MCF 10A (cell line): ENCODE measurements at regions of chr5 and their contacts with region 1.

Region 1: GRCh38 chr5:14685757-14686156 is 21.2 kb downstream of the OTULIN start:
- DNase-seq: peak; percentile 51
- H3K4me3 Mint-ChIP-seq: no peak overlapping the region
- H3K27ac Mint-ChIP-seq: peak overlapping the region; percentile 14
- H3K4me1 Mint-ChIP-seq: peaks cover 19% of the 10 kb centered on the region
- H3K27me3 Mint-ChIP-seq: no peaks in the 10 kb centered on the region
- CTCF ChIP-seq: peak; percentile 60

Region 2: DNA sequence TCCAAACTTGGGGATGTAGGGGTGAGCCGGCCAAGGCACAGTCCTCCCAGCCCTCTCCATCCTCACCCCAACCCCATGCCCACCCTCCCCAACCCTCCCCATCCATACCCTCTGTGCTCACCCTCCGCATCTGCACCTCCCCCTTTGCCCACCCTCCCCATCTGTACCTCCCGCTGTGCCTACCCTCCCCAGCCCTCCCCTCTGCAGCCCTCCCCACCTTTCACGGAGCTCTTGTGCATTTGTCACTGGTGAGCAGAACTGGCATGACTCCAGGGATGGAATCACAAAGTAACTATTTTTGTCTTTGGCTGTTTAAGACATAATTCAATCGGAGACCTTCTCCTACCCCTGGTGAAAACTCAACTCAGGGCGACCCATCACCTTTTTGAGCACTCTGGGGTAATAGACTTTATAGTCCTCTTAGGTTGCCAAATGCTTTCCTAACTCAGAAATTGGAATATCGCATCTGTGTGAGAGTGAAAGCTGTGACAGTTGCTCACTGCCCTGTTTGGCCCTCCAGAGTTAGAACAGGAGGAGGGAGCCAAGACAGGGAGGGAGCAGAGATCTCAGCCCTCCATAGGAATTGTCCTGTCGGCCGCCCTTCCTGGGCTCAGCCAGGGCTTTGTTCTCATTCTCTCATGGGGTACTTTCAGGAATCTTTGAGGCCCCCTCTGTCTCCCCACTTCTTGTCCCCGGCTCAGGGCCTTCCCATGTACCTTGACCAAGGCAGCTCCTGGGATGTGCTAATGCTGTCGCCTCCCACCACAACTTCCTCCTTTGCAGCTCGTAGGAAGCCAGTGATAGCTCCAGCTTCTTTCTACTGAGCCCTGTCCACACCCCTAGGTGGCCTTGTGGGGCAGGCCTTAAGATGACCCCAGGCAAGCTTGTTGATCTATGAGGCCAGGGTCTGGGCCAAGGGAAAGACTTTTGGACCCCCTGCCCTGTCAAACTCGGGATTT is 15.0 kb after region 1 on chr5:
- CTCF ChIA-PET with region 1: interaction called, 47 read pairs
- POLR2A ChIA-PET with region 1: interaction called, 10 read pairs
- intact Hi-C with region 1: no loop called
- DNase-seq: no peak
- H3K4me3 Mint-ChIP-seq: no peak overlapping the region
- H3K27ac Mint-ChIP-seq: no peak overlapping the region
- H3K4me1 Mint-ChIP-seq: peaks cover 16% of the 10 kb centered on the region
- H3K27me3 Mint-ChIP-seq: no peaks in the 10 kb centered on the region
- CTCF ChIP-seq: no peak

Region 3: GRCh38 chr5:14706615-14707021 is 20.9 kb after region 1 on chr5:
- CTCF ChIA-PET with region 1: interaction called, 47 read pairs
- POLR2A ChIA-PET with region 1: interaction called, 10 read pairs
- intact Hi-C with region 1: no loop called
- DNase-seq: no peak
- H3K4me3 Mint-ChIP-seq: no peak overlapping the region
- H3K27ac Mint-ChIP-seq: peak overlapping the region; percentile 52
- H3K4me1 Mint-ChIP-seq: peaks cover 20% of the 10 kb centered on the region
- H3K27me3 Mint-ChIP-seq: no peaks in the 10 kb centered on the region
- CTCF ChIP-seq: no peak

Region 4: DNA sequence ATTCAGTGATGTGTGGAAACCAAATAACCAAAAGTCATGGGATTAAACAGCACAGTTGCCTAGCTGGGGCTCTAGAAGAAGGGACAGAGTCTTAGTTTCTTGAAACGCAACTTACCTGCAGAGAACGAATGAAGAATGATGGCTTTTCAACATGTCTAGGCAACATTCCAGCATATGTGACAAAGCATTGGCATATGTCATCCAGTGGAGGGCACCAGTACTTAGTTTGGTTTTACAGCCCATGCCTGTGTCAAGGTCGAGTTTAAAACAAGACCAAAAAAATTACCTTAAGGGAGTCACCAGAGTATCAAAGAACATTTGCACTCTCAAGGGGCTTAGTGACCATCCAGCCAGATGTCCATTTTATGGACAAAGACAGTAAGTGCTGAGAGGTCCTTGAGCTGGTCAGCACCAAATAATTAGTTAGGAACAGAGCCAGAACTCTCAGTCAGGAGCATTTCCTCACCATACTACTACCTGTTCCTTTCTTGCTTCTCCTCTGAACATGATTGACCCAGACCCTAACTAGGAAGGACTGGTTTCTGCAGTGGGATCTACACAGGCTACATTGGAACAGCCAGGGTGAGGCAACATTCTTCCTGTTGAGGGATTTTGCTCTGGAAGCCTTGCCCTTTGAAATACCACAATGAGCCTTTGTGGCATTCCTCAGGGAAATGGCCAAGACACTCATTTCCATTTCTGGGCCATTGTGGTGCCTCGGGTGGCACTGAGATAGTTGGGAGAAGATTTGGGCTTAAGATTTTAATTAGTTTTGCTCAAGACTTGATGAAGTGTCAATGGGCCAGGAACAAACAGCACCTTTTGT is 261.3 kb after region 1 on chr5:
- CTCF ChIA-PET with region 1: interaction called, 3 read pairs
- POLR2A ChIA-PET with region 1: no interaction called
- intact Hi-C with region 1: loop called (anchors 5 kb)
- DNase-seq: peak; percentile 66
- H3K4me3 Mint-ChIP-seq: no peak overlapping the region
- H3K27ac Mint-ChIP-seq: no peak overlapping the region
- H3K4me1 Mint-ChIP-seq: peaks cover 6% of the 10 kb centered on the region
- H3K27me3 Mint-ChIP-seq: no peaks in the 10 kb centered on the region
- CTCF ChIP-seq: peak; percentile 27

Region 5: DNA sequence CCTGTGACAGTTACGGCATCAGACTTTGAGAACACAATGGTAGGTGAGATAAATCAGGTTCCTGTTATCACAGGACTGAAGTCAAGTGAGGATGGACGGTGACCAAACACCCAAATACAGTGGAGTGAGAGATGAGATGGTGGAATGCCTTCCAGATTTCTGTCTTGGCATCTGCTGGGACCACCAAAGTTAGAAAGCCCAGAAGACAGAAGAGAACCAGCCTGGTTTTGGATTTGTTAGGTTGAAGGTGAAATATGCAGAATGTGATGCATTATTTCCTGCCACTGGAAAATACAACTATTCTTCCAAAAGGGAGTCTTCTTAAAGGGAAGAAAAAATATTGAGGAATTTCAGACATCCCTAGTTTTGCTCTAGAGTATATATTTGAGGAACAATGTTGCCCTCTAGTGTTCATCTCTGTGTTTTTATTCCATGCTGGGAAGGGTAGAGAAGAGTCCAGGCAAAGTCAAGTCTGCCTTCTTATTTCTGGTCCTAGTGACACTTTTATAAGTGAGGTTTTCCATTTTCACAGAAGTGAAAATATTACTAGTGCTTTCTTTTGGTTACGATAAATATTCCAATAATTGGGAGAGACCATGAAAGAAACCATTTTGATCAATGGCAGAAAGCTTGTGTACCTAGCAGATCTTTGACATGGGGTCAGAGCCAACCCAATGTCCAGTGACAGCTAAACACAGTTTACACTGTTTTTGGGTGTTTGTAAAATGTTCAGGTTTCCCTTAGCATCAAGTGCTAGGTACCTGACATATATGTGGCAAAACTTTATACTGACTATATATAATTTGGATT is 328.1 kb after region 1 on chr5:
- CTCF ChIA-PET with region 1: interaction called, 27 read pairs
- POLR2A ChIA-PET with region 1: interaction called, 10 read pairs
- intact Hi-C with region 1: loop called (anchors 1 kb)
- DNase-seq: peak; percentile 69
- H3K4me3 Mint-ChIP-seq: no peak overlapping the region
- H3K27ac Mint-ChIP-seq: no peak overlapping the region
- H3K4me1 Mint-ChIP-seq: peaks cover 14% of the 10 kb centered on the region
- H3K27me3 Mint-ChIP-seq: no peaks in the 10 kb centered on the region
- CTCF ChIP-seq: peak; percentile 56